GM12878 (cell line): ENCODE measurements at regions of chr18 and their contacts with region 1.

Region 1: DNA sequence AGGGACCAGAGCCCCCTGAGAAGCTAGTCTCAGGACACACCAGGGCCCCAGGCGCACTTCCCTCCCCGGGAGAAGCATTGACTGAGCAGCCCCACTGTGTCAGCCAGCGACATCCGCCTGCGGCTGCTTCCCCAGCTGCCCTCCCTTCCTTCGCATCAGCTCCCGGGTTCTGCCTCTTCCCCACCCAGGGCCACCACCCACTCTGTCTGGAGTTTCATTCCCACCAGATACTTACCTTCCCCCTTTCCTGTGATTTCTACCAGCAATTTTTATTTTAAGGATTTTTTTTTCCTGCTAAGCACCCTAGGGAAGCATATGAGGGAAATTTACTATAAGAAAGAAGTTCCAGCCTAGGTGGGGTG is 99.2 kb downstream of the SMAD7 start:
- DNase-seq: no peak
- ATAC-seq: no peak
- H3K4me3 ChIP-seq: no peak overlapping the region
- H3K27ac ChIP-seq: no peak overlapping the region
- H3K4me1 ChIP-seq: peaks cover 2% of the 10 kb centered on the region; the same call in 1 of the 2 replicates
- H3K27me3 ChIP-seq: no peaks in the 10 kb centered on the region
- CTCF ChIP-seq: no peak
- EP300 ChIP-seq: no peak
- POLR2A ChIP-seq: no peak
- RAD21 ChIP-seq: no peak

Region 2: GRCh38 chr18:48896690-48897511 is 45.3 kb after region 1 on chr18:
- CTCF ChIA-PET with region 1: no interaction called
- POLR2A ChIA-PET with region 1: no interaction called
- RAD21 ChIA-PET with region 1: no interaction called
- SMC1A ChIA-PET with region 1: no interaction called
- in situ Hi-C with region 1: no loop called
- intact Hi-C with region 1: no loop called
- DNase-seq: peak; percentile 19
- ATAC-seq: peak; percentile 92
- H3K4me3 ChIP-seq: no peak overlapping the region
- H3K27ac ChIP-seq: peak overlapping the region; percentile 34; the same call in 1 of the 2 replicates
- H3K4me1 ChIP-seq: peaks cover 13% of the 10 kb centered on the region
- H3K27me3 ChIP-seq: no peaks in the 10 kb centered on the region
- CTCF ChIP-seq: peak in 2 of 3 experiments; percentile 14 to 25; a peak in 2 of 6 replicates
- EP300 ChIP-seq: 0 out of 4 replicates have a peak, but pooled peaks of 1 of the 2 experiments have one; percentile 6
- POLR2A ChIP-seq: no peak
- RAD21 ChIP-seq: peak; percentile 34; the same call in 1 of the 2 replicates

Region 3: GRCh38 chr18:49127471-49128190 is 276.1 kb after region 1 on chr18:
- CTCF ChIA-PET with region 1: no interaction called
- POLR2A ChIA-PET with region 1: no interaction called
- RAD21 ChIA-PET with region 1: no interaction called
- SMC1A ChIA-PET with region 1: no interaction called
- in situ Hi-C with region 1: no loop called
- intact Hi-C with region 1: no loop called
- DNase-seq: no peak
- ATAC-seq: no peak
- H3K4me3 ChIP-seq: no peak overlapping the region
- H3K27ac ChIP-seq: no peak overlapping the region
- H3K4me1 ChIP-seq: no peaks in the 10 kb centered on the region
- H3K27me3 ChIP-seq: no peaks in the 10 kb centered on the region
- CTCF ChIP-seq: no peak
- EP300 ChIP-seq: no peak
- POLR2A ChIP-seq: no peak
- RAD21 ChIP-seq: no peak

Region 4: GRCh38 chr18:49277395-49278036 is 425.9 kb after region 1 on chr18:
- CTCF ChIA-PET with region 1: no interaction called
- POLR2A ChIA-PET with region 1: no interaction called
- RAD21 ChIA-PET with region 1: no interaction called
- SMC1A ChIA-PET with region 1: no interaction called
- in situ Hi-C with region 1: no loop called
- intact Hi-C with region 1: no loop called
- DNase-seq: no peak
- ATAC-seq: no peak
- H3K4me3 ChIP-seq: no peak overlapping the region
- H3K27ac ChIP-seq: no peak overlapping the region
- H3K4me1 ChIP-seq: no peaks in the 10 kb centered on the region
- H3K27me3 ChIP-seq: no peaks in the 10 kb centered on the region
- CTCF ChIP-seq: no peak
- EP300 ChIP-seq: no peak
- POLR2A ChIP-seq: no peak
- RAD21 ChIP-seq: no peak

Region 5: GRCh38 chr18:50111265-50111792 is 1259.7 kb after region 1 on chr18:
- CTCF ChIA-PET with region 1: no interaction called
- POLR2A ChIA-PET with region 1: interaction called, 10 read pairs
- RAD21 ChIA-PET with region 1: no interaction called
- SMC1A ChIA-PET with region 1: no interaction called
- in situ Hi-C with region 1: no loop called
- intact Hi-C with region 1: no loop called
- DNase-seq: no peak
- ATAC-seq: peak; percentile 52; the same call in 2 of the 3 replicates
- H3K4me3 ChIP-seq: no peak overlapping the region
- H3K27ac ChIP-seq: no peak overlapping the region
- H3K4me1 ChIP-seq: no peaks in the 10 kb centered on the region
- H3K27me3 ChIP-seq: peaks cover 0 to 12% of the 10 kb centered on the region in 2 experiments; a peak in 2 of 4 replicates
- CTCF ChIP-seq: peak; percentile 7 to 52 (median 21); a peak in 4 of 6 replicates
- EP300 ChIP-seq: no peak
- POLR2A ChIP-seq: no peak
- RAD21 ChIP-seq: peak; percentile 63